GM13976 (cell line): ENCODE measurements at regions of chr2 and their contacts with region 1.

Region 1: GRCh38 chr2:172102391-172103278 is at the start of gene DLX2:
- DNase-seq: peak; percentile 89
- CTCF ChIP-seq: no peak

Region 2: GRCh38 chr2:170928824-170929685 is 1173.6 kb before region 1 on chr2 and contains the start of gene GORASP2:
- in situ Hi-C with region 1: loop called (anchors 25 kb)
- DNase-seq: peak; percentile 98
- CTCF ChIP-seq: peak; percentile 99

Region 3: DNA sequence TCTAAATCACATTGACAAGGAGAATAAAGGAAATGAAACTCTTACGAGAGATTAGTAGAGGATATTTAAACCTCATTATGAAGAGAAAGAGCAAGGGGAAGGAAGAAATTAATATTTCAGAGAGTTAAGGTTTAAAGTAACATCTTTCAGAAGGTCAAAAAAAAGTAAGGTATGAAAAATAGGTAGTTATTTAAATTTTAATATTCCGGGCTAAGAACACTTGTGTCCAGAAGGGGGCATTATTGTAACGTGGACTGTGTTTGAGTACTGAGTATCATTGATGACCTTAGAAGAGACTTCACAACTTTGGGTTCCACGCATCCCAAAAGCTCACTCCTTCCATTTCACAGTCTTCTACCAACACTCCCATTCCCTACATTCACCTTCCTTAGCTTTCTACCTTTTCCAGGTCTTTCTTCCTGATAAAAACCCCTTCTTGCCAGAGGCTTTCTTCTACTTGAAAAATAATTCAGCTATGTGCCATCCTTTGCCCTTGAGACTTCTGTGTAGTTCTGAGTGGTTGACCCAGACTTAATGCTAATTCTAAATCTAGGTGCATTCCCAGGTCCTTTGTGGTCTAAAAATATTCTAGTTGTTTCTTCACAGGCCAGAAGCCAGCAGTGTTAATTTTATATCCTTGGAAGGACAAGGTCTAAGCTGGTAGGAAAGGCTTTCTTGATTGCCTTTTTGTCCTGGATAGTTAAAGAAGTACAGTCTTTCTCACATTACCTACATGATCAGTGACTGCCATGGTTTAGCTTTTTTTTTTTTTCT is 398.9 kb before region 1 on chr2:
- in situ Hi-C with region 1: loop called (anchors 10 kb)
- DNase-seq: peak; percentile 53
- CTCF ChIP-seq: peak; percentile 49